ENCODE measurements at regions of chr18 and their contacts with region 1.

Region 1: DNA sequence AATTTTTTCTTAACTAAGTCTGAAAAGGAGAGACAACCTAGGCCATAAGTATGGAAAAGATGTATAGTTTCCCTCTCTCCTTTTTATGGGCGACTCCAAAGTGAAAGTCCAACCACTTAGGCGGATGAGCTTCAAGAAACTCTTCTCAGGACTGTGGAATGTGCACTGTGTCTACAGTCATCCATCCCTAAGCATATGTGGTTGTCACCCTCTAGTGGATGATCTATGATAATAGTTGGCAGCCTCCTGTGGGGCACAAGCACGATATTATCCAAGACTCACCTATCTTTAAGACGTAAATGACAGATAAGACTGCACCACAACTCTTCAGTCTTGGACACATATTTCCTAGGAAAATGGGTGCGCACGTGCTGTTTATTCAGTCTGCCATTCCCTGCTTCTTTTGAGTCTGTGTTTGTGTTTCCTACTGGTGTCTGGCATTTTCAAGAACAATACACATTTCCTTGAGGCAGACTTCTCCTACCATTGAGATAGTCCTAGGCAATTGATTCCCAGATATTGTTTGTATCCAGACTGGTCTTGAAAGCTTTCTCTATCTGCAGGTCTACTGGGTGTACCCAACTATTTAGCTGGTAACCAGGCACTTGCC is 145.5 kb upstream of the CTAGE1 start:
- DNase-seq: peak in 4 of 9 experiments; percentile 14 to 79 (median 44)
- ATAC-seq: peak; percentile 78
- H3K4me3 ChIP-seq: no peak overlapping the region
- H3K4me3 Mint-ChIP-seq: no peak overlapping the region
- H3K27ac ChIP-seq: no peak overlapping the region
- H3K27ac Mint-ChIP-seq: no peak overlapping the region
- H3K4me1 ChIP-seq: peaks cover 10% of the 10 kb centered on the region
- H3K4me1 Mint-ChIP-seq: peaks cover 8% of the 10 kb centered on the region
- H3K27me3 ChIP-seq: peaks cover 7 to 29% of the 10 kb centered on the region in 2 experiments
- H3K27me3 Mint-ChIP-seq: peaks cover 45% of the 10 kb centered on the region
- CTCF ChIP-seq: peak; percentile 44

Region 2: GRCh38 chr18:21997207-21998143 is 565.7 kb before region 1 on chr18:
- CTCF ChIA-PET with region 1: interaction called, 24 read pairs
- POLR2A ChIA-PET with region 1: no interaction called
- intact Hi-C with region 1: loop called (anchors 1 to 2 kb)
- DNase-seq: peak in 2 of 9 experiments; percentile 47 to 59
- ATAC-seq: peak; percentile 36
- H3K4me3 ChIP-seq: no peak overlapping the region
- H3K4me3 Mint-ChIP-seq: no peak overlapping the region
- H3K27ac ChIP-seq: no peak overlapping the region
- H3K27ac Mint-ChIP-seq: no peak overlapping the region
- H3K4me1 ChIP-seq: no peaks in the 10 kb centered on the region
- H3K4me1 Mint-ChIP-seq: peaks cover 2% of the 10 kb centered on the region
- H3K27me3 ChIP-seq: no peaks in the 10 kb centered on the region
- H3K27me3 Mint-ChIP-seq: peaks cover 6% of the 10 kb centered on the region
- CTCF ChIP-seq: peak; percentile 72

Region 3: GRCh38 chr18:22238036-22238435 is 325.2 kb before region 1 on chr18:
- CTCF ChIA-PET with region 1: interaction called, 19 read pairs
- POLR2A ChIA-PET with region 1: no interaction called
- intact Hi-C with region 1: loop called in 1 of 2 experiments (anchors 1 kb)
- DNase-seq: peak in 7 of 9 experiments; percentile 3 to 86 (median 35)
- ATAC-seq: peak; percentile 89
- H3K4me3 ChIP-seq: no peak overlapping the region
- H3K4me3 Mint-ChIP-seq: no peak overlapping the region
- H3K27ac ChIP-seq: no peak overlapping the region
- H3K27ac Mint-ChIP-seq: no peak overlapping the region
- H3K4me1 ChIP-seq: peaks cover 6% of the 10 kb centered on the region
- H3K4me1 Mint-ChIP-seq: peaks cover 16% of the 10 kb centered on the region
- H3K27me3 ChIP-seq: no peaks in the 10 kb centered on the region
- H3K27me3 Mint-ChIP-seq: no peaks in the 10 kb centered on the region
- CTCF ChIP-seq: no peak

Region 4: DNA sequence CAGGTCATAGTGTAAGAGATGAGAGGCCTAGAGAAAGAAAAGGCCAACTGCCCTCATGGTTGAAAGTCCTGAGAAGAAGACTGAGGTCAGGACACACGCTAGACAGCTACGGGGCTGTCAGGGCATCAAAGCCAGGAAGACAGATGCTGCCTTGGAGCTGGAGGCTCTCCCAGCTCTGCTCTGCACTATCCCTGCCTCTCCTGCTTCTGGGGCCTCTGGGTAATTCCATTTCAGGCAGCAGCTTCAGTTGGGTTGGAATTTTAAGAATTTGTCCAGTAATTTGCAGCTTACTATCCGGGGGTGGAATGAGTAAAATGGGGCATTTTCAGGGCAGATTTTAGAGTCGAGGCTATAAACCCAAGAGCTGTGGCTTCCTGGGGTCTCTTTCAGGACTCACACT is 69.3 kb before region 1 on chr18:
- CTCF ChIA-PET with region 1: no interaction called
- POLR2A ChIA-PET with region 1: no interaction called
- intact Hi-C with region 1: loop called in 1 of 2 experiments (anchors 2 kb)
- DNase-seq: no peak
- ATAC-seq: no peak
- H3K4me3 ChIP-seq: no peak overlapping the region
- H3K4me3 Mint-ChIP-seq: no peak overlapping the region
- H3K27ac ChIP-seq: no peak overlapping the region
- H3K27ac Mint-ChIP-seq: no peak overlapping the region
- H3K4me1 ChIP-seq: no peaks in the 10 kb centered on the region
- H3K4me1 Mint-ChIP-seq: no peaks in the 10 kb centered on the region
- H3K27me3 ChIP-seq: no peaks in the 10 kb centered on the region
- H3K27me3 Mint-ChIP-seq: peaks cover 9% of the 10 kb centered on the region
- CTCF ChIP-seq: no peak

Measured in CD8-positive, alpha-beta T cell (primary cell).